H1 (cell line): ENCODE measurements at regions of chr19 and their contacts with region 1.

Region 1: GRCh38 chr19:37899966-37900365 is 6.4 kb downstream of the WDR87 start:
- DNase-seq: no peak
- H3K4me3 ChIP-seq: no peak overlapping the region
- H3K27ac ChIP-seq: no peak overlapping the region
- H3K4me1 ChIP-seq: no peaks in the 10 kb centered on the region
- H3K27me3 ChIP-seq: no peaks in the 10 kb centered on the region
- CTCF ChIP-seq: no peak
- EP300 ChIP-seq: no peak
- POLR2A ChIP-seq: no peak
- RAD21 ChIP-seq: no peak

Region 2: DNA sequence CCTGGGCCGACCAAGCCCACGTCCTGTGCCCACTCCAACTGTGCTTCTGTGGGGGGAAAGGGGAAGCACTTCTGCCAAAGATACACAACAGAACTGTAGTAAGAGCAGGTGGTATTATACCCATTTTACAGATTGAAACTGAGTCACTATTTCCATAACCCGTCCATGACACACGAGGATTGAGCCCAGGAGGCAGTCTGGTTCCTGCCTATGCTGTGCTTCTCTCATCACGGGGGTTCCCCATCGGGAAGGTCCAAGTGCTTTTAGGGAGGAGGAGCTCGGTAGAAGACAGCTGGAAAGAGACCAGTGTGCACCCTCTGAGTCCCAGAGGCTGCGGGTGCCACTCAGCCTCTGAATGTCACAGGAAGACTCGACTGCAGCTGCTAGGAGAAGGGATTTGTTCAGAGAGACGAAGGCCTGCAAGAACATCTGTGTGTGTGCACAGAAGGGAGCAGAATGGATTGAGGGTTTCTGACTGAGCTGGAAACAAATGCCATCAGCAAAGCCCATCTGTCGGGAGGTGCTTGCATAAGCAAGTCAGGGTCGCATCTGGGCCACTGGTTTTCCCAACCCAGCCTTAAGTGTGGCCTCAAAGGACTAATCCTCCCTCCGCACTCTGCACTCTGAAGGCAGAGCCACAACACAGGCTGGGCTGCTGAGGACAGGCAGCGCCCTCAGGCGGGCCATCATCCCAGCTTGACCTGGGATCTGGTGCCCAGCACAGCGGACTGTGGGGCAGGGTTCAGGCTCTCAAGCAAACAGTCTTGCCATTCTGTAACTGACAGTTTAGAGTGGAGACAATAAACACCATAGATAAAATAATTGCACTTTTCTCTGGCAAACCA is 174.1 kb after region 1 on chr19:
- CTCF ChIA-PET with region 1: interaction called, 57 read pairs
- POLR2A ChIA-PET with region 1: interaction called, 4 read pairs
- DNase-seq: peak; percentile 36 to 65
- H3K4me3 ChIP-seq: no peak overlapping the region
- H3K27ac ChIP-seq: no peak overlapping the region
- H3K4me1 ChIP-seq: no peaks in the 10 kb centered on the region; a peak in 1 of 7 replicates
- H3K27me3 ChIP-seq: no peaks in the 10 kb centered on the region
- CTCF ChIP-seq: peak; percentile 81 to 87 (median 86)
- EP300 ChIP-seq: no peak
- POLR2A ChIP-seq: no peak
- RAD21 ChIP-seq: peak; percentile 88 to 91